ENCODE measurements at regions of chr9 and their contacts with region 1.

Region 1: DNA sequence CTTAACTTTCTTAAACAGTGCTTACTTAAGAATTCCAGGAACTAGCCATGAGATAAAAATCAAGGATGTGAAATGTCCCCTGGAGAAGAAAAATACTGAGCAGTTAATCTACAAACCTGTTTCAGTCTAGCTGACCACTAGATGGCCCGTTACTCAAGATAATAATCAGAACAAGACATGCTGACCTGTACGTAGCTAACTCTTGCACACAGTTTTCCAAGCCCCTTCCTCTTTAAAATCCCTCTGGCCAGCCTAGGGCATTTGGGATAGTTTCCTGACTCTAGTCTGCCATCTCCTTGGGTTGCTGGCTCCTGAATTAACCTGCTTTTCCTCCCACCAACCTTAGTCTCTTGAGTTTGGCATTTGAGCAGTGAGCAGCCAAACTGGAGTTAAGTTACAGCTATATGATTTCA is 59.2 kb upstream of the TRAF1 start:
- DNase-seq: peak; percentile 50
- ATAC-seq: peak; percentile 78
- H3K4me3 ChIP-seq: no peak overlapping the region
- H3K27ac ChIP-seq: no peak overlapping the region
- H3K4me1 ChIP-seq: no peaks in the 10 kb centered on the region
- H3K27me3 ChIP-seq: no peaks in the 10 kb centered on the region
- CTCF ChIP-seq: peak; percentile 62 to 72 (median 69)
- POLR2A ChIP-seq: no peak
- RAD21 ChIP-seq: peak; percentile 83

Region 2: GRCh38 chr9:120755827-120756434 is 229.9 kb before region 1 on chr9:
- CTCF ChIA-PET with region 1: interaction called, 19 read pairs
- POLR2A ChIA-PET with region 1: no interaction called
- RAD21 ChIA-PET with region 1: no interaction called
- intact Hi-C with region 1: loop called (anchors 2 kb)
- DNase-seq: peak; percentile 24
- ATAC-seq: peak; percentile 86
- H3K4me3 ChIP-seq: no peak overlapping the region
- H3K27ac ChIP-seq: no peak overlapping the region
- H3K4me1 ChIP-seq: no peaks in the 10 kb centered on the region
- H3K27me3 ChIP-seq: no peaks in the 10 kb centered on the region
- CTCF ChIP-seq: peak; percentile 74 to 93 (median 76)
- POLR2A ChIP-seq: no peak
- RAD21 ChIP-seq: peak; percentile 92

Region 3: GRCh38 chr9:120923620-120924328 is 62.0 kb before region 1 on chr9:
- CTCF ChIA-PET with region 1: no interaction called
- POLR2A ChIA-PET with region 1: no interaction called
- RAD21 ChIA-PET with region 1: no interaction called
- intact Hi-C with region 1: no loop called
- DNase-seq: no peak
- ATAC-seq: no peak
- H3K4me3 ChIP-seq: no peak overlapping the region
- H3K27ac ChIP-seq: no peak overlapping the region
- H3K4me1 ChIP-seq: peaks cover 0 to 3% of the 10 kb centered on the region in 2 experiments; a peak in 1 of 4 replicates
- H3K27me3 ChIP-seq: no peaks in the 10 kb centered on the region
- CTCF ChIP-seq: no peak
- POLR2A ChIP-seq: no peak
- RAD21 ChIP-seq: no peak

Region 4: DNA sequence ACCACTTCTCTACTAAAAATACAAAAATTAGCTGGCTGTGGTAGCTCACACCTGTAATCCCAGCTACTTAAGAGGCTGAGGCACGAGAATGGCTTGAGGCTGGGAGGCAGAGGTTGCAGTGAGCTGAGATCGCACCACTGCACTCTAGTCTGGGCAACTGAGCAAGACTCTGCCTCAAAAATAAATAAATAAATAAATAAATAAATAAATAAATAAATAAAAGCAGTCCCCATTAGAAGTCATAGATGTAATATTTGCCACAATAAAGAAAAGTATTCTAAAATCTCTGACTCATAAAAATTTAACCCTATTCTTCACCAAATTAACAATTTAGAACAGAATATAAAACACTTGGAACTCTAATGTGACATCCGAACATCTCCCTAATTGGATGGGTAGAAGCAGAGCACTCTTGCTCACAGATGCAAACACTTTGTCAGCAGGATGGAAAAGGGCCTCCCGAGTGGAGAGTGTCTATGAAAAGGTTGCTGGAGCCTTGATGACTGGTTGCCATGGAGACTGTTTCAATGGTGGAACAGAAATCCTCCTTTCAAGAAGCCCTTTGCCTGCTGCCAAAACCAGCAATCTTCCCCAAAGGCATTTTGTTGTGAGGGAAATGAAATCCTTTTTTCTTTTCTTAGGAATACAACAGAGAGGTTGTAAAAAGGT is 20.3 kb before region 1 on chr9:
- CTCF ChIA-PET with region 1: interaction called, 15 read pairs
- POLR2A ChIA-PET with region 1: no interaction called
- RAD21 ChIA-PET with region 1: no interaction called
- intact Hi-C with region 1: no loop called
- DNase-seq: no peak
- ATAC-seq: no peak
- H3K4me3 ChIP-seq: no peak overlapping the region
- H3K27ac ChIP-seq: no peak overlapping the region
- H3K4me1 ChIP-seq: no peaks in the 10 kb centered on the region
- H3K27me3 ChIP-seq: no peaks in the 10 kb centered on the region
- CTCF ChIP-seq: no peak
- POLR2A ChIP-seq: no peak
- RAD21 ChIP-seq: no peak

Region 5: DNA sequence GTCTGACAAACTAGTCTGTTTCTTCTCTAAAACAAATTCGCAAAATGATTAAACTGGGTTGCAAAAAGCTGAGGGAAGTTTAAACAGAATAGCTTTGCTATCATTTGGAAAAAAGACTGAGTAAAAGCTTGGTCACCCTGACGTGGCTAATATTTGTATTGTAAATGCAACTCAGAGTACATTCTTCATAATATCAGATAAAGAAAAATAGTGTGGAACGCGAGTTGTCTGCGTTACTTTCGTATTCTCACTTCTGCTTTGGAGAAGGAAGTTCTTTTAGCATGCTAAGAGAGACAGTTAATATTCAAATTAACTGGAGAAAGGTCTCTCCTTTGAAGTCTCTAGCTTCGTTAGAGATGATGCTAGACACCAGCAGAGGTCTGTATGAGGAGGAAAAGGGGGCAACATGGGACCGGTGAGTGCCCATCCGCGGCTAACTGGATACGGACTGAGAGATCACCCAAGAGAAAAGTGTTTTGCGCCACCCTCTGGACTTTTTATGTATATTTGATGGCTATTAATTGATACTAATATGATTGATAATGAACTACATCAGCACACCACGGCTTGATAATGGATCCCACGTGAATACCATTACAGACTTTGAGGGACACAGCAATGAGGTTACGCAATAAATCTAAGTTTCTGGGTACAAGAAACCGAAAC is 86.1 kb after region 1 on chr9:
- CTCF ChIA-PET with region 1: interaction called, 10 read pairs
- POLR2A ChIA-PET with region 1: no interaction called
- RAD21 ChIA-PET with region 1: no interaction called
- intact Hi-C with region 1: no loop called
- DNase-seq: no peak
- ATAC-seq: peak; percentile 13; the same call in 1 of the 2 replicates
- H3K4me3 ChIP-seq: peak overlapping the region; percentile 31 to 54
- H3K27ac ChIP-seq: no peak overlapping the region
- H3K4me1 ChIP-seq: peaks cover 0 to 20% of the 10 kb centered on the region in 2 experiments; a peak in 2 of 4 replicates
- H3K27me3 ChIP-seq: peaks cover 3% of the 10 kb centered on the region; the same call in 1 of the 2 replicates
- CTCF ChIP-seq: peak; percentile 17 to 50 (median 36); a peak in 4 of 6 replicates
- POLR2A ChIP-seq: no peak
- RAD21 ChIP-seq: peak; percentile 58

Region 6: DNA sequence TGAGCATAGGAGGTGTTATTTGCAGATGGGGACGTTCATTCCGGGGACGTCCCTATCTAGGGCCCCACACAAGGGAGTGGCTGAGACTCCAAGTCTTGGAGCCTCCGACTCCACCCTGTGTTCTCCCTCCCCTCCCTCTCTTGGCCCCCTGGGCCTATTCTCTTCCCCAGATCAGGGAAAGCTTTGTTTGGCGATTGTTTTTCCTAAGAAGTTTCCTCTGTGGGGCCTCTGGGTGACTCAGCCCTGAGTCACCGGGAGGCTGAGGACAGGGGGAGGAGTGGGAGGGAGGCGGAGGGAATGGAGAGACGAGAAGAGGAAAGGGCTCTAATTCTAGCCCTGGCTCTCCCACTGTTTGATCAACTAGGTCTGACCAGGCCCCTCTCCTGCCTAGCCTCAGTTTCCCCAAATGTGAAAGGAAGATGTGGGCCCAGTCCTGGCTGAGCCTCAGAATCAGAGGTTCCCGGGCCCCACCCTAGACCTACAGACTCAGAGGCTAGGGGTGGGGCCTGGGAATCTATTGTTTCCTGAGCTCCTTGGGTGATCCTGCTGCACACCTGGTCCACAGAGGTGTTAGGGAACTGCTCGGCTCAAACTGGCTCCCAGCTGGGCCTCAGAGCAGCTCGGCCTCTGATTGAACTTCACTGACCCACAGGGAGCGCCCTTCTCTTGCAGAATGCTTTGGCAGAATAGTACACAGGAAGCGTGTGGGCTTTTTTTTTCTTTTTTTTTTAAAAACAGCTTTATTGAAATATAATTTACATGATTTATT is 301.3 kb after region 1 on chr9:
- CTCF ChIA-PET with region 1: no interaction called
- POLR2A ChIA-PET with region 1: no interaction called
- RAD21 ChIA-PET with region 1: no interaction called
- intact Hi-C with region 1: loop called (anchors 10 kb)
- DNase-seq: peak; percentile 98
- ATAC-seq: peak; percentile 86
- H3K4me3 ChIP-seq: peak overlapping the region; percentile 39 to 52
- H3K27ac ChIP-seq: peak overlapping the region; percentile 99
- H3K4me1 ChIP-seq: peaks cover 77 to 81% of the 10 kb centered on the region in 2 experiments
- H3K27me3 ChIP-seq: no peaks in the 10 kb centered on the region
- CTCF ChIP-seq: peak in 2 of 3 experiments; percentile 39 to 45; a peak in 4 of 6 replicates
- POLR2A ChIP-seq: peak; percentile 11
- RAD21 ChIP-seq: no peak